CD4-positive, alpha-beta T cell (primary cell): ENCODE measurements at regions of chr12 and their contacts with region 1.

Region 1: DNA sequence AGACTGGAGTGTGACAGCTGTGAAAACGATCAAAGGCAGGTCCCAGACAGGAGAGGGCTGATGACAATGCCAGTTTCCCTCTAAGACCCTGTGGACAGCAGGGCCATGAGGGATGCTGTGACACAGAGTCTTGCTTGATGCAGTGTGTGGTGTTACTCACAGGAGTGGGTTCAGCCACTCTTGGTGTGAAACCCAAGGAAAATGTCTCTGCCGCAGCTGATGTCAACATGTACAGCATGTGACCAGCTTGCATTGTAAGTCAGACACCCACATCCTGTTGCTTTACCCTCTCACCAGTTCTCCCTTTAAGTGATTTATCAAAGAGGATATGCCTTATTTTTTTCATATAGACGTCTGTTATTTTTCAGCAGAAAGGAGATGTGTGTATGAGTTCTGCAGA is 268.6 kb downstream of the BTG1 start:
- DNase-seq: peak; percentile 71 to 98 (median 82)
- ATAC-seq: peak; percentile 90
- H3K4me3 ChIP-seq: peak overlapping the region; percentile 30
- H3K4me3 Mint-ChIP-seq: peak overlapping the region; percentile 73
- H3K27ac ChIP-seq: peak overlapping the region; percentile 92 to 97
- H3K27ac Mint-ChIP-seq: peak overlapping the region; percentile 98
- H3K4me1 ChIP-seq: peaks cover 44% of the 10 kb centered on the region
- H3K4me1 Mint-ChIP-seq: peaks cover 67% of the 10 kb centered on the region
- H3K27me3 ChIP-seq: no peaks in the 10 kb centered on the region
- H3K27me3 Mint-ChIP-seq: no peaks in the 10 kb centered on the region
- CTCF ChIP-seq: no peak

Region 2: DNA sequence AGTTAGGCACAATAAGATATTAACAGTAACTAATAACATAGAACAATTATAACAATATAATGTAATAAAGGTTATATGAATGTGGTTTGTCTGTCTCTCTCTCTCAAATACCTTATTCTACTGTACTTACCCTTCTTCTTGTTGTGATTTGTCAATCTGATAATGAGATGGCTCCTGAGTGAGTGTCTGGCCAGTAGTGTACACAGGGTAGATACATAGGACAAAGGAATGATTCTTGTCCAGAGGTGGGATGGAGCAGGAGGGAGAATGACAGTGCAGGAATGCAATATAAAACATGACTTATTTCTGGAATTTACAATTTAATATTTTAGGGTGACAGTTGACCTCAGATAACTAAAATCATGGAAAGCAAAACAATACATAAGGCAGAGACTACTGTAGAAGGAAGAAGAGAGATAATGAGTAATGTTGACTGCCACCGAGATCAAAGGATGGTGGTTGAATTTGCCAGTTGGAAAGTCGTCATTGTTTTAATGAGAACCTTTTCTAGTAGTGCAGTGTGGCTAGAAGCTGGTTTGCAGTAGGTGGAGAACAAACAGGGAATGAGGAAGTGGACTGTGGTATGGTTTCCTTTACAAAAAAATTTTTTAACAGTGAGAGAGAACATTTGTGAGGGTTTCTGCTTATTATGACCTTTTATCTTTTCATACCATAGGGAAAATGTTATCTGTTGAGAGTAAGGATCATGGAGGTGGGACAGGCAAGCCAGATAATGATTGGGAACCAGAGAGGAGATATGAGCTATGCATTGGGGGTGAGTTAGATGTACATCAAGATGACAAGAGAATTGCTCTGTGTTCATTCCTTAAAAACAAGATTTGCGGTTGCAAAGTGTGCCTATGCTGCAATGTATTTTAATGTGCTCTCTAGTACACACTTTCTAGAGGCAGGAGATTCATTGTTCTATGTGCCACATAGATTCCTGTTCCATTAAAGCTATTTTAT is 189.7 kb before region 1 on chr12:
- CTCF ChIA-PET with region 1: no interaction called
- POLR2A ChIA-PET with region 1: no interaction called
- intact Hi-C with region 1: loop called in 1 of 2 experiments (anchors 1 kb)
- DNase-seq: peak in 7 of 14 experiments; percentile 2 to 66 (median 52)
- ATAC-seq: peak; percentile 91
- H3K4me3 ChIP-seq: no peak overlapping the region
- H3K4me3 Mint-ChIP-seq: peak overlapping the region; percentile 5
- H3K27ac ChIP-seq: no peak overlapping the region
- H3K27ac Mint-ChIP-seq: peak overlapping the region; percentile 65
- H3K4me1 ChIP-seq: no peaks in the 10 kb centered on the region
- H3K4me1 Mint-ChIP-seq: peaks cover 23% of the 10 kb centered on the region
- H3K27me3 ChIP-seq: no peaks in the 10 kb centered on the region
- H3K27me3 Mint-ChIP-seq: no peaks in the 10 kb centered on the region
- CTCF ChIP-seq: no peak

Region 3: GRCh38 chr12:91811481-91812287 is 65.3 kb before region 1 on chr12:
- CTCF ChIA-PET with region 1: interaction called, 28 read pairs
- POLR2A ChIA-PET with region 1: interaction called, 33 read pairs
- intact Hi-C with region 1: loop called in 1 of 2 experiments (anchors 2 kb)
- DNase-seq: peak; percentile 58 to 90 (median 78)
- ATAC-seq: peak; percentile 86
- H3K4me3 ChIP-seq: no peak overlapping the region
- H3K4me3 Mint-ChIP-seq: no peak overlapping the region
- H3K27ac ChIP-seq: no peak overlapping the region
- H3K27ac Mint-ChIP-seq: peak overlapping the region; percentile 64
- H3K4me1 ChIP-seq: peaks cover 2% of the 10 kb centered on the region
- H3K4me1 Mint-ChIP-seq: peaks cover 26% of the 10 kb centered on the region
- H3K27me3 ChIP-seq: no peaks in the 10 kb centered on the region
- H3K27me3 Mint-ChIP-seq: no peaks in the 10 kb centered on the region
- CTCF ChIP-seq: peak; percentile 87

Region 4: GRCh38 chr12:91887948-91888347 is 10.9 kb after region 1 on chr12:
- CTCF ChIA-PET with region 1: no interaction called
- POLR2A ChIA-PET with region 1: interaction called, 15 read pairs
- intact Hi-C with region 1: no loop called
- DNase-seq: no peak
- ATAC-seq: no peak
- H3K4me3 ChIP-seq: no peak overlapping the region
- H3K4me3 Mint-ChIP-seq: no peak overlapping the region
- H3K27ac ChIP-seq: no peak overlapping the region
- H3K27ac Mint-ChIP-seq: no peak overlapping the region
- H3K4me1 ChIP-seq: no peaks in the 10 kb centered on the region
- H3K4me1 Mint-ChIP-seq: peaks cover 8% of the 10 kb centered on the region
- H3K27me3 ChIP-seq: no peaks in the 10 kb centered on the region
- H3K27me3 Mint-ChIP-seq: no peaks in the 10 kb centered on the region
- CTCF ChIP-seq: no peak

Region 5: DNA sequence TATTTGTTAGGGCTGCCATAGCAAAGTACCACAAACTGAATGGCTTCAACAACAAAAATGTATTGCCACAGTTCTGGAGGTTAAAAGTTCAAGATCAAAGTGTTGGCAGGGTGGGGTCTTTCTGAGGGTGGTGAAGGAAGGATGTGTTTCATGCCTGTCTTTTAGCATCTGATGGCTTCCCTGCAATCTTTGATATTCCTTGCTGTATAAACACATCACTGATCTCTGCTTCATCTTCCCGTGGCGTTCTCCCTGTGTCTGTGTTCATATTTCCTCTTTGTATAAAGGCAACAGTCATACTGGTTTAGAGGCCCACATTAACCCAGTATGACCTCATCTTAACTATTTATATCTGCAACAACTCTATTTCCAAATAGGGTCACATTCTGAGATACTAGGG is 101.1 kb after region 1 on chr12:
- CTCF ChIA-PET with region 1: no interaction called
- POLR2A ChIA-PET with region 1: interaction called, 7 read pairs
- intact Hi-C with region 1: loop called in 1 of 2 experiments (anchors 1 kb)
- DNase-seq: peak in 12 of 14 experiments; percentile 8 to 85 (median 44)
- ATAC-seq: peak; percentile 88
- H3K4me3 ChIP-seq: no peak overlapping the region
- H3K4me3 Mint-ChIP-seq: peak overlapping the region; percentile 3
- H3K27ac ChIP-seq: peak overlapping the region; percentile 2 to 52
- H3K27ac Mint-ChIP-seq: peak overlapping the region; percentile 79
- H3K4me1 ChIP-seq: peaks cover 24% of the 10 kb centered on the region
- H3K4me1 Mint-ChIP-seq: peaks cover 55% of the 10 kb centered on the region
- H3K27me3 ChIP-seq: no peaks in the 10 kb centered on the region
- H3K27me3 Mint-ChIP-seq: no peaks in the 10 kb centered on the region
- CTCF ChIP-seq: no peak

Region 6: GRCh38 chr12:92041742-92042141 is 164.7 kb after region 1 on chr12:
- CTCF ChIA-PET with region 1: no interaction called
- POLR2A ChIA-PET with region 1: interaction called, 16 read pairs
- intact Hi-C with region 1: loop called in 1 of 2 experiments (anchors 10 kb)
- DNase-seq: peak in 7 of 14 experiments; percentile 21 to 75 (median 57)
- ATAC-seq: peak; percentile 97
- H3K4me3 ChIP-seq: no peak overlapping the region
- H3K4me3 Mint-ChIP-seq: peak overlapping the region; percentile 77
- H3K27ac ChIP-seq: peak overlapping the region in 1 of 2 donors; percentile 20
- H3K27ac Mint-ChIP-seq: peak overlapping the region; percentile 85
- H3K4me1 ChIP-seq: peaks cover 47% of the 10 kb centered on the region
- H3K4me1 Mint-ChIP-seq: peaks cover 88% of the 10 kb centered on the region
- H3K27me3 ChIP-seq: no peaks in the 10 kb centered on the region
- H3K27me3 Mint-ChIP-seq: no peaks in the 10 kb centered on the region
- CTCF ChIP-seq: no peak

Region 7: GRCh38 chr12:92593734-92594402 is 716.8 kb after region 1 on chr12:
- CTCF ChIA-PET with region 1: no interaction called
- POLR2A ChIA-PET with region 1: no interaction called
- intact Hi-C with region 1: loop called in 1 of 2 experiments (anchors 1 kb)
- DNase-seq: peak; percentile 59 to 98 (median 72)
- ATAC-seq: peak; percentile 84
- H3K4me3 ChIP-seq: no peak overlapping the region
- H3K4me3 Mint-ChIP-seq: peak overlapping the region; percentile 28
- H3K27ac ChIP-seq: peak overlapping the region; percentile 96 to 97
- H3K27ac Mint-ChIP-seq: peak overlapping the region; percentile 91
- H3K4me1 ChIP-seq: peaks cover 31% of the 10 kb centered on the region
- H3K4me1 Mint-ChIP-seq: peaks cover 43% of the 10 kb centered on the region
- H3K27me3 ChIP-seq: no peaks in the 10 kb centered on the region
- H3K27me3 Mint-ChIP-seq: no peaks in the 10 kb centered on the region
- CTCF ChIP-seq: no peak

Region 8: DNA sequence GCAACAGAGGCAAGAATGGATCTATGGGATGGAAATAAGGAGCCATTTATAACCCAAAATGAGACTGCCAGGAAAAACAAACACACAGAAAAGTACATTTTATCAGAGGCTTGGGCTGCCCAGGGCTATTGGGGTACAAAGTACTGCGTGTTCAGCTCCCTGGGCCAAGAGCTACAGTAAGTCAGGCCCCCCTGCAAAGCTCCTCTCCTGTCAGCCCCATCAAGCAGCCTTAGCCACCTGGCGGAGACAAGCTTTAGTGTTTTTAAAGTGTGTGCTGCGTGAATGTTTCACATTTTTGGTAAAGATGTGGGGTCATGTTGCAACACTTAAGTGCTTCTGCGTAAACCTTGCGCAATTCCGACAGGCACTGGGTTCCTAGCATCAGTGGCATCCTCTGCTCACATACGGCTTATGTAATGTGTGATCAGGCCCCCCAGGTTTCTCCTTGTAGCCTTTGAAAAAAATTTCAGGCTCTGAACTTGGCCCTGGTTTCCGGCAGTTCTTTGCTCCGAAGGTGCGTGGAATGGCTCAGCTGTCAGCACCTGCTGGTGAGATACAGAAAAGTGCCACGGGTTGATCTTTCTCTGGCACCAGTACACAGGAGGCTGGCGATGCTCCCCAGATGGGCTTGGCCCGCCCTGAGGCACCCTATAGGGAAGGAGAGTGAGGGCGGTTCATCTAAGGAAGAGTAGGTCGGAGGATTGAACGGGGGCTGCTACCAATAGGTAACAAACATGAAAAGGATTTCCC is 1250.7 kb after region 1 on chr12:
- CTCF ChIA-PET with region 1: no interaction called
- POLR2A ChIA-PET with region 1: no interaction called
- intact Hi-C with region 1: no loop called
- DNase-seq: peak in 2 of 14 experiments; percentile 36 to 38
- ATAC-seq: no peak
- H3K4me3 ChIP-seq: no peak overlapping the region
- H3K4me3 Mint-ChIP-seq: no peak overlapping the region
- H3K27ac ChIP-seq: no peak overlapping the region
- H3K27ac Mint-ChIP-seq: no peak overlapping the region
- H3K4me1 ChIP-seq: no peaks in the 10 kb centered on the region
- H3K4me1 Mint-ChIP-seq: no peaks in the 10 kb centered on the region
- H3K27me3 ChIP-seq: no peaks in the 10 kb centered on the region
- H3K27me3 Mint-ChIP-seq: no peaks in the 10 kb centered on the region
- CTCF ChIP-seq: no peak